Mammary epithelial cell (primary cell): ENCODE measurements at regions of chr10 and their contacts with region 1.

Region 1: GRCh38 chr10:49592726-49593563 is 17.2 kb upstream of the SLC18A3 start:
- DNase-seq: peak; percentile 61
- H3K4me3 ChIP-seq: no peak overlapping the region
- H3K27ac ChIP-seq: no peak overlapping the region
- H3K4me1 ChIP-seq: peaks cover 15% of the 10 kb centered on the region
- H3K27me3 ChIP-seq: no peaks in the 10 kb centered on the region
- CTCF ChIP-seq: peak; percentile 95 to 99

Region 2: DNA sequence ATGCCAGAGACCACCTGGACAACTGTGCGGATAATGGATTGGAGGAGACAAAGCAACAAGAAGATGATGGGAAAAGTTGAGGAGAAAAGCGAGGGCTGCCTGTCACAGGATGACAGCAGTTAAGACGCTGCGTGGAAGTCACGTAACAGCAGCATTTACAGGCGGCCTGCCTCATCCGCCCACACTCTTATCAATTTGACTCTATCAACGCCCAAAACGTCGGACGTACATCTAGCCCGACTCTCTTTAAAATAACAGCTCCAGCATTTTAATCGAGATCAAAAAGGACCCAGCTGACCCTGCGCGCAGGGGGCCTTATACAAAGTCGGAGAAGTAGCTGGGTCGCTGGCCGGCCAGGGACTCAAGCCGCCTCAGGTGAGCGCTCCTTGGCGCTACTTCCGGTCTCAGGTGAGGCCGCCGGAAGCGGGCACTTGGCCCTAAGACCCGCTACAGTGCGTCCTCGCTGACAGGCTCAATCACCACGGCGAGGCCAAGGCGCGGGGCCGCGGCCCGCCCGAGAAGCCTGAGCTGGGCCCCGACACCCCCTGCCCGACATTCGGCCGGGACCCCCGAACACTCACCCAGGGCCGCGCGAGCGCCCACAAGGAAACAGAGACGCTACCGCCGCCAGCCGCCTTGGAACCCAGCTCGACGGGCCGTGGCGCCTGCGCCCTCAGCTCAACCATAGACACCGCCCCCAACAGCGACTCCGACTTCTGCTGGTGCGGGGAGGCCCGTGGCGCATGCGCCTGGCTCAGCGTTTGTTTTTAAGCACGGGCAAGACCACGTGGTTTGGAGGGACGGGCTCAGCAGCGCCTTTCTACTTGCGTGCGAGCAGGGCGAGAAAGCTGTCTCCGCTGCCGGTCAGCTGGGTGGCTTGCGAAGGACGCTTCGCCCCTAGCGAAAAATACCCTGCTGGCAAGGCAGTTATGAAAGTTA is 54.3 kb before region 1 on chr10 and contains the start of gene ERCC6:
- CTCF ChIA-PET with region 1: interaction called, 3 read pairs
- dilution Hi-C with region 1: loop called (anchors 5 kb)
- in situ Hi-C with region 1: no loop called
- intact Hi-C with region 1: loop called (anchors 1 kb)
- DNase-seq: peak; percentile 97
- H3K4me3 ChIP-seq: peak within 1 kb of the TSS; percentile 58 to 86 (median 74)
- H3K27ac ChIP-seq: peak within 1 kb of the TSS; percentile 93
- H3K4me1 ChIP-seq: peaks cover 50% of the 10 kb centered on the region
- H3K27me3 ChIP-seq: no peaks in the 10 kb centered on the region
- CTCF ChIP-seq: peak in 1 of 2 donors; percentile 6
- total RNA-seq, gene ERCC6: 35.5 to 106 TPM

Region 3: DNA sequence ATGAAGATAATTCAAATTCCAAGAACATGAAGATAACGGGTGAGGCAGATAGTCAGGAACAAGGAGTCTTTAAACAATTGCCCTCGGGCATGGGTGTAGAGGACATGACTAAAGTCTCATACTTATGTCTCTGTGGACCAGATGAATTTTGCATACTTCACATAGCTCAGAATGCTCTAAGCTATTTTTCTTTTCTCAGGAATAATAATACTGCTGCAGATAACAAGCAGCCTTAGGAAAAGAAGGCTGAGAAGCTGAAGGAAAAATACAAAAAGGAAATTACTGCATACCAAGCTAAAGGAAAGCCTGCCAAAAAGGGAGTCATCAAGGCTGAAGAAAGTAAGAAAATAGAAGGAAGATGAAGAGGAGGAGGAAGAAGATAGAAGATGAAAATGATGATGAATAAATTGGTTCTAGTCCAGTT is 40.7 kb before region 1 on chr10:
- CTCF ChIA-PET with region 1: interaction called, 3 read pairs
- dilution Hi-C with region 1: no loop called
- in situ Hi-C with region 1: no loop called
- intact Hi-C with region 1: loop called (anchors 1 kb)
- DNase-seq: peak; percentile 90
- H3K4me3 ChIP-seq: no peak overlapping the region
- H3K27ac ChIP-seq: peak overlapping the region; percentile 99
- H3K4me1 ChIP-seq: peaks cover 51% of the 10 kb centered on the region
- H3K27me3 ChIP-seq: no peaks in the 10 kb centered on the region
- CTCF ChIP-seq: no peak

Region 4: DNA sequence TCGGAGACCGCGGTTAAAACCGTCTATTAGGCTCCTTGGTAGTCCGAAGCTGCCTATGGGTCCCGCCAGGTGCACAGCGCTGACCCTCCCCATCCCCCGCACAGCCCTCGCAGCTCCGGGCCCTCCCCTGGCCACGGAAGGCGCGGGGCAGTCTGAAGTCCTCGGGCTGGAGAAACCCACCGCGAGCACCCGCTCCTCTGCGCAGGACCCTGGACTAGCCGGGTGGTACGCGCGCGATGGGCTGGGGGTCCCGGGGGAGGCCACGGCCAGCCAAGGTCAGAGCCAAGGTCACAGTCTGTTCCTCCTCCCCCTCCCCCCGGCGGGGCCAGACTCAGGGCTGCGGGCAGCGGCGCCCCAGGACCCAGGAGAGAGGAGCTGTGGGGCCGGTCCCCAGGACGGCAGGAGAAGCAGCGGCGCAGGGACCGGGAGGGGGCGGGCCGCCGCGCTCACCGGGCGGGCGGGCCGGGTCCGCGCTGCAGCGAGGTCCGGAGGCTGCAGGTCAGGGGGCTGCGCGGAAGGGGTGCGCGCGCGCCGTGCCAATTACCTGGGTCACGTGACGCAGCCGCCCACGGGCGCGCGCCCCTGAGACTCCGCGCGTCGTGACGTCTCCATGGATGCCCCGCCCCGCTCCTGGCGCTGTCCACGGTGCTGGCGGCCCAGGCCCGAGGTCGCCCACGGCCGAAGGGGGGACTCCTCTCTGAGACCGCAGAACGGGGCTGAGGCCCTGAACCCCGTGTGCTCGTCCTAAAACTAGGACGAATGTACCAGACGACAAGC is 169.0 kb after region 1 on chr10 and contains the start of gene OGDHL:
- CTCF ChIA-PET with region 1: no interaction called
- dilution Hi-C with region 1: no loop called
- in situ Hi-C with region 1: no loop called
- intact Hi-C with region 1: loop called (anchors 1 kb)
- DNase-seq: peak; percentile 44
- H3K4me3 ChIP-seq: peak within 1 kb of the TSS; percentile 36 to 52 (median 51)
- H3K27ac ChIP-seq: no peak within 1 kb of the TSS
- H3K4me1 ChIP-seq: no peaks in the 10 kb centered on the region
- H3K27me3 ChIP-seq: no peaks in the 10 kb centered on the region
- CTCF ChIP-seq: no peak
- total RNA-seq, gene OGDHL: 0.33 to 0.40 TPM

Region 5: DNA sequence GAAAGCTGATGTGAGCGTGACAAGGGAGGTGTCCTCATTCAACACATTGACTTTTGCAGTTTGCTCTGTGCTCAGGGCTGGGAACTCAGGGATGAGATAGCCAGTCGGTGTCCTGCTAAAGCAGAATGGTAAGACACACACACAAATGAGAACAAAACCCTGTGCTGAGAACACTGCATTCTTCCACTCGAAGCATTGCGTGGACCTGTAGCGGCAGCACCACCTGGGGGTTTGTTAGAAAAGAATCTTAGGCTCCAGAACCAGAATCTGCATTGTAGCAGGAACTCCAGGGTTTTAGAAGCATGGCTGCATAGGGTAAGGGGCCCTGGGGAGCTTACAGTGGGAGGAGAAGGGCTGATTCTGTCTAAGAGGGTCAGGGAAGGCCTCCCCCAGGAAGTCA is 190.7 kb after region 1 on chr10:
- CTCF ChIA-PET with region 1: no interaction called
- dilution Hi-C with region 1: no loop called
- in situ Hi-C with region 1: no loop called
- intact Hi-C with region 1: loop called (anchors 2 kb)
- DNase-seq: no peak
- H3K4me3 ChIP-seq: no peak overlapping the region
- H3K27ac ChIP-seq: no peak overlapping the region
- H3K4me1 ChIP-seq: no peaks in the 10 kb centered on the region
- H3K27me3 ChIP-seq: no peaks in the 10 kb centered on the region
- CTCF ChIP-seq: no peak

Region 6: GRCh38 chr10:50224330-50224952 is 631.5 kb after region 1 on chr10:
- CTCF ChIA-PET with region 1: no interaction called
- dilution Hi-C with region 1: no loop called
- in situ Hi-C with region 1: loop called in 1 of 2 experiments (anchors 25 kb)
- intact Hi-C with region 1: loop called (anchors 1 kb)
- DNase-seq: peak; percentile 74
- H3K4me3 ChIP-seq: no peak overlapping the region
- H3K27ac ChIP-seq: no peak overlapping the region
- H3K4me1 ChIP-seq: peaks cover 4% of the 10 kb centered on the region
- H3K27me3 ChIP-seq: no peaks in the 10 kb centered on the region
- CTCF ChIP-seq: peak; percentile 65 to 79